GM13976 (cell line): ENCODE measurements at regions of chr11 and their contacts with region 1.

Region 1: GRCh38 chr11:43579171-43579918 is 101.2 kb upstream of the HSD17B12 start:
- DNase-seq: peak; percentile 77
- CTCF ChIP-seq: peak; percentile 55

Region 2: GRCh38 chr11:43486141-43486540 is 93.2 kb before region 1 on chr11:
- in situ Hi-C with region 1: no loop called
- DNase-seq: no peak
- CTCF ChIP-seq: no peak

Region 3: GRCh38 chr11:43532041-43532440 is 47.3 kb before region 1 on chr11:
- in situ Hi-C with region 1: no loop called
- DNase-seq: no peak
- CTCF ChIP-seq: no peak

Region 4: GRCh38 chr11:43852057-43852636 is 272.8 kb after region 1 on chr11:
- in situ Hi-C with region 1: loop called (anchors 10 kb)
- DNase-seq: peak; percentile 75
- CTCF ChIP-seq: peak; percentile 82

Region 5: GRCh38 chr11:44398266-44399045 is 819.1 kb after region 1 on chr11:
- in situ Hi-C with region 1: no loop called
- DNase-seq: no peak
- CTCF ChIP-seq: no peak